ENCODE measurements at regions of chr19 and their contacts with region 1.

Region 1: DNA sequence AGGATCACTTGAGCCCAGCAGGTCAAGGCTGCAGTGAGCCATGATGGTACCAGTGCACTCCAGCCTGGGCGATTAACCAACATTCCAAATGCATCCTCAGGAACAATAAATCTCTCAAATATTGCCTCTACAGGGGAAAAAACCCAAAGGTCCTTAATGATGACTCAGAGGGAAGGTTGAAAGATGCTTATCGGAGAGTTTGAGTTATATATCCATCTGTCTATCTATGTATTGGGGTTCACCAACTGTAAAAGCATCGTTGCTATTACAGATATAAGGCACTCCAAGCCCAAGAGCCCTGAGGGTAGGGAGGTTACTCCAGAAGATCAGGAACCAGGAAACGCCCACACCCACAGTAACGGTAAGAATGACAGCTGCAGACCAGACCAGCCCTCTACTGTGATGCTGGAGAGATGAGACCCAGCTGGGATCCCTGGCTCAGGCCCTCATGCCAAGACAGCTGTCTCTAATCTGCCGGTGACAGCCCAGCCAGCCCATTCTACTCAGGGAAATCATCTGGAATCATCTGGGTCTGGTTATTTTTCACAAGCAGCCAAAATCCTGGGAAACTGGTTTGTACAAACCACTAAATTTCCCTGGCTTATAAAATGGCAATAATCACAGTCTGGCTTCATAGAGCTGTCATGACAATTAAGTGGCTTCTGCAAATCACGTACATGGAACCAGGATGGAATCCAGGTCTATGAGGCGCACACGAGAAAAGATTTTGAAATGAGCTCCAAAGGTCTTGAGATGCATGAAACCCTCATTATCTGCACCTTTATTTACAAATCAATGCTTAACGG is 23.8 kb downstream of the TEX101 start:
- DNase-seq: peak; percentile 31
- ATAC-seq: peak; percentile 45
- H3K4me3 Mint-ChIP-seq: no peak overlapping the region
- H3K27ac Mint-ChIP-seq: peak overlapping the region; percentile 66
- H3K4me1 Mint-ChIP-seq: peaks cover 36% of the 10 kb centered on the region
- H3K27me3 Mint-ChIP-seq: no peaks in the 10 kb centered on the region
- CTCF ChIP-seq: no peak

Region 2: DNA sequence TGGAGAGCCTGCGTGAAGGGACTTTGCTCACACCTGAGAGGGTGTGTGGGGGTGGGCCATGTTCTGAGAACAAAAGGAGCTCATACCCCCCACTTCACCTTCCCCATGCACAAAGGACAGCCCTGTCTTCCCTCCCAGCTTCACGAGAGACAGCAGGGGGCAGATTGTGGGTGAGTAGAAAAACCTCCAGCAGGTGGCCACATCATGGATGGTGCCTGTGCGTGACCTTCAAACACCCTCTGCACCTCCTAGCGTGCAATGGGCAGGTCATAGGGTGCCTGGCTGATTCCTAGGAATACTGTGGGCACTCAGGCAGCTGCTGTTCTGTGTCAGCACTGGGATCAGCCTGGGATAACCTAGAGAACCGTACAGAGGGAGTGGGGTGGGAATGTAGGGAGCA is 132.8 kb before region 1 on chr19:
- CTCF ChIA-PET with region 1: no interaction called
- POLR2A ChIA-PET with region 1: no interaction called
- intact Hi-C with region 1: no loop called
- DNase-seq: no peak
- ATAC-seq: no peak
- H3K4me3 Mint-ChIP-seq: no peak overlapping the region
- H3K27ac Mint-ChIP-seq: no peak overlapping the region
- H3K4me1 Mint-ChIP-seq: no peaks in the 10 kb centered on the region
- H3K27me3 Mint-ChIP-seq: peaks cover 10% of the 10 kb centered on the region
- CTCF ChIP-seq: no peak

Region 3: GRCh38 chr19:43425567-43426392 is 12.7 kb before region 1 on chr19:
- CTCF ChIA-PET with region 1: interaction called, 11 read pairs
- POLR2A ChIA-PET with region 1: no interaction called
- intact Hi-C with region 1: no loop called
- DNase-seq: no peak
- ATAC-seq: no peak
- H3K4me3 Mint-ChIP-seq: no peak overlapping the region
- H3K27ac Mint-ChIP-seq: no peak overlapping the region
- H3K4me1 Mint-ChIP-seq: peaks cover 9% of the 10 kb centered on the region
- H3K27me3 Mint-ChIP-seq: no peaks in the 10 kb centered on the region
- CTCF ChIP-seq: peak; percentile 55

Region 4: DNA sequence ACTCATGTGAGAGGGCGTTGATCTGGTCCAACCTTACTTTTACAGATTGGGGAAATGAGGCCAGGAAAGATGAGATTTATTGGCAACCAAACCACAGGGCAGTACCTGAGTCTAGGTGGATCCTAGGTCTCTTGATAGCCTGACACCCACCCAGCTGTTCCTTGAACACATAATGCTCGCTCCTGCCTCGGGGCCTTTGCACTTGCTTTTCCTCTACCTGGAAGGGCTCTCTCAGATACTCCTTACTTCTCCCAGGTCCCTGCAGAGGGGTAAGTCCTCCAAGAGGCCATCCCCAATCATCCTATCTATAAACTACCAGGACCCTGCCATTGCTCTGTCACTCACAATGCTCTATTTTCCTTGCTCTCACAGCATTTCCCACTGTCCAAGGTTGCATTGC is 101.9 kb after region 1 on chr19:
- CTCF ChIA-PET with region 1: no interaction called
- POLR2A ChIA-PET with region 1: no interaction called
- intact Hi-C with region 1: no loop called
- DNase-seq: no peak
- ATAC-seq: no peak
- H3K4me3 Mint-ChIP-seq: no peak overlapping the region
- H3K27ac Mint-ChIP-seq: no peak overlapping the region
- H3K4me1 Mint-ChIP-seq: peaks cover under 1% of the 10 kb centered on the region
- H3K27me3 Mint-ChIP-seq: no peaks in the 10 kb centered on the region
- CTCF ChIP-seq: no peak

Measured in activated CD8-positive, alpha-beta T cell treated with anti-CD3 and anti-CD28 coated beads for 36 hours (primary cell).